Posterior vena cava (tissue), 2 donors: ENCODE measurements at regions of chr15 and their contacts with region 1.

Region 1: DNA sequence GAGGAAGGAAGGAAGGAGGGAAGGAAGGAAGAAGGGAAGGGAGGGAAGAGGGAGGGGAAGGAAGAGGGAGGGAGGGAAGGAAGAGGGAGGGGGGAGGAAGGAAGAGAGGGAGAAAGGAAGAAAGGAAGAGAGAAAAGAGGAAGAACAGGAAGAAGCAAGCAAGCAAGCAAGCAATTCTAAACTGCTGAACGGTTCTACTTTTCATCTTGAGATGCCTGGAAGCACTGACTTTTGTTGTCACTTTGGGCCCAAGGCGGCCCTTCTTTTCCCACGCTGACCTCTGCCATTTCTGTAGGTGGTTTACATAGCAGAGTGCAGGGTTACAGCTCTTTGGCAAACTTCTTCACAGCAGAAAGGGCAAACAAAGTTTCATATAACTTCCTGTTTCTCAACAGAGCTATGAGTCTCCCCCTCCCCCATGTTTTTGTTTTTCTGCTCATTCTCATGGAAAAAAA is 342.1 kb upstream of the NR2F2 start:
- DNase-seq: no peak

Region 2: GRCh38 chr15:95973566-95974256 is 14.7 kb before region 1 on chr15:
- intact Hi-C with region 1: loop called in 1 of 2 experiments (anchors 2 kb)
- DNase-seq: no peak